SK-N-SH (cell line): ENCODE measurements at regions of chr13 and their contacts with region 1.

Region 1: DNA sequence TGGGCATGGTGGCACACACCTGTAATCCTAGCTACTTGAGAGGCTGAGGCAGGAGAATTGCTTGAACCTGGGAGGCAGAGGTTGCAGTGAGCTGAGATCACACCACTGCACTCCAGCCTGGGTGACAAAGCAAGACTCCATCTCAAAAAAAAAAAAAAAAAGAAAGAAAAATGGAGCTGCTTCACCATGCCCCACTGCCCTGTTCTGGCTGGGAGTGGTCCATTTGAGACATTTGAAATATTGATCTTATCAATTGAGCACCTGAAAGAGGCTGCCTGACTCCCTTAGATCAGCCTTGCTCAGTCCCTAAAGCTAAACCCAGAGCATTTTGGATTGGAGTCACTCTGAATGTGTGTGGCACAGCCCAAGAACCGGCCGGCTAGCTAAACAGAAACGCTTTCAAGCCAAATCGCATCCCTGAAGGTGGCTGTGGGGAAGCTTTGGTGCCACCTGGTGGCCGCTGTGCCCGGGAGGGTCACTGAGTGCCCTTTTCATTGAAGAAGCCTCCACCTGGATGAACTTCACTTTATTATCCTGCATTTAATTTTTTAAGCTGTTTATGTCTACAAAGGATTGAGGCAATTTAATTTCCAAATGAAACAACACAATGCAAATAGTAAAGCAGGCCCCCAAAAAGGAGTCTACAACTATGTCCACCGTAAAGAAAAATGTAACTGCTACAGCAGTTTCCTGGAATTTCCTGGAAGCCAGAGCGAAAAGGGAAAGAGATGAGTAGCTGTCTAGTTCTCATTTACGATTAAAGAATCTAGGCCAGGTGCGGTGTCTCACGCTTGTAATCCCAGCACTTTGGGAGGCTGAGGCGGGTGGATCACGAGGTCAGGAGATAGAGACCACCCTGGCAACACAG is 53.1 kb upstream of the SERPINE3 start:
- DNase-seq: peak; percentile 80
- H3K4me3 ChIP-seq: no peak overlapping the region; a peak in 1 of 4 replicates
- H3K27ac ChIP-seq: no peak overlapping the region
- H3K4me1 ChIP-seq: no peaks in the 10 kb centered on the region; a peak in 1 of 4 replicates
- H3K27me3 ChIP-seq: no peaks in the 10 kb centered on the region
- CTCF ChIP-seq: peak; percentile 98
- EP300 ChIP-seq: no peak
- RAD21 ChIP-seq: peak; percentile 95

Region 2: DNA sequence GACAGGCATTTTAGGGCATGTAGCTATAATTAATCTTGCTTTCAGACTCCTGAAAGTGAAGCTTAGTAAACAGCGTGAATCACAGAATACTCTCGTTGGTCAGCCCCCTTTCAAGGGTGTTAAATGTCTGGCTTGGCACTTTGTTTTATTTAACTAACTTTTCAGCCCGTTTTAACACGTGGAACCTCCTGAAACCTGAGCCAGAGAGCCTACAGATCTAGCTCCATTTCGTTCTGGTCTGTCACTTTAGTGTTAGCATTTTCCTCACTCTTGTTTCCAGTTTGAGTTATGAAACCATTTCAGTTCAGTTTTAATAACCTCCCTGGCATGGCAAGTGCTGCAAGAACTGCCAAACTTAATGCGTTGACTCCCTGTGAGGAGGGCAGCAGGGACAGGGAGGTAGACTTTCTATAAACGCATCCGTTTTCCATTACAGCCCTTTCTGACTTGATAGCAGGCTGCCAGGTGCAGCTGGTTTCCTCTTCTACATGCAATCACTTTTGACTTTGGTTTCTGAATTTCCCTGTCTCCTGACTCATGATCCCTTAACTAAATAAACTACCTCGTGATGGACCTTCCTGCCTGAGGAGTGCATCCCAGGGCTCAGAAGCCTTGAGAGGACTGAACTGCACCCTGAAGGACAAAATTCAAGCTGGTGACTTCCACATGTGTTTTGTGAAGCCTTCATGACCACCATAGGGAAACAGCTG is 635.6 kb before region 1 on chr13:
- CTCF ChIA-PET with region 1: no interaction called
- POLR2A ChIA-PET with region 1: no interaction called
- DNase-seq: no peak
- H3K4me3 ChIP-seq: no peak overlapping the region
- H3K27ac ChIP-seq: peak overlapping the region in 1 of 2 experiments; percentile 39; a peak in 2 of 4 replicates
- H3K4me1 ChIP-seq: peaks cover 5 to 10% of the 10 kb centered on the region in 2 experiments; a peak in 3 of 4 replicates
- H3K27me3 ChIP-seq: no peaks in the 10 kb centered on the region
- CTCF ChIP-seq: no peak
- EP300 ChIP-seq: 0 out of 4 replicates have a peak, but pooled peaks of 1 of the 2 experiments have one; percentile 24
- RAD21 ChIP-seq: no peak

Region 3: GRCh38 chr13:50745561-50746115 is 540.7 kb before region 1 on chr13:
- CTCF ChIA-PET with region 1: no interaction called
- POLR2A ChIA-PET with region 1: no interaction called
- DNase-seq: no peak
- H3K4me3 ChIP-seq: no peak overlapping the region
- H3K27ac ChIP-seq: no peak overlapping the region
- H3K4me1 ChIP-seq: no peaks in the 10 kb centered on the region
- H3K27me3 ChIP-seq: no peaks in the 10 kb centered on the region
- CTCF ChIP-seq: peak; percentile 31; the same call in 1 of the 2 replicates
- EP300 ChIP-seq: no peak
- RAD21 ChIP-seq: no peak

Region 4: GRCh38 chr13:51134763-51135365 is 151.5 kb before region 1 on chr13:
- CTCF ChIA-PET with region 1: interaction called, 105 read pairs
- POLR2A ChIA-PET with region 1: interaction called, 3 read pairs
- DNase-seq: no peak
- H3K4me3 ChIP-seq: no peak overlapping the region
- H3K27ac ChIP-seq: no peak overlapping the region
- H3K4me1 ChIP-seq: no peaks in the 10 kb centered on the region
- H3K27me3 ChIP-seq: no peaks in the 10 kb centered on the region
- CTCF ChIP-seq: no peak
- EP300 ChIP-seq: no peak
- RAD21 ChIP-seq: no peak

Region 5: GRCh38 chr13:51213173-51213728 is 73.1 kb before region 1 on chr13:
- CTCF ChIA-PET with region 1: interaction called, 25 read pairs
- POLR2A ChIA-PET with region 1: no interaction called
- DNase-seq: no peak
- H3K4me3 ChIP-seq: no peak overlapping the region
- H3K27ac ChIP-seq: no peak overlapping the region
- H3K4me1 ChIP-seq: peaks cover 0 to 2% of the 10 kb centered on the region in 2 experiments; a peak in 2 of 4 replicates
- H3K27me3 ChIP-seq: peaks cover 38% of the 10 kb centered on the region; the same call in 1 of the 2 replicates
- CTCF ChIP-seq: no peak
- EP300 ChIP-seq: no peak
- RAD21 ChIP-seq: no peak

Region 6: DNA sequence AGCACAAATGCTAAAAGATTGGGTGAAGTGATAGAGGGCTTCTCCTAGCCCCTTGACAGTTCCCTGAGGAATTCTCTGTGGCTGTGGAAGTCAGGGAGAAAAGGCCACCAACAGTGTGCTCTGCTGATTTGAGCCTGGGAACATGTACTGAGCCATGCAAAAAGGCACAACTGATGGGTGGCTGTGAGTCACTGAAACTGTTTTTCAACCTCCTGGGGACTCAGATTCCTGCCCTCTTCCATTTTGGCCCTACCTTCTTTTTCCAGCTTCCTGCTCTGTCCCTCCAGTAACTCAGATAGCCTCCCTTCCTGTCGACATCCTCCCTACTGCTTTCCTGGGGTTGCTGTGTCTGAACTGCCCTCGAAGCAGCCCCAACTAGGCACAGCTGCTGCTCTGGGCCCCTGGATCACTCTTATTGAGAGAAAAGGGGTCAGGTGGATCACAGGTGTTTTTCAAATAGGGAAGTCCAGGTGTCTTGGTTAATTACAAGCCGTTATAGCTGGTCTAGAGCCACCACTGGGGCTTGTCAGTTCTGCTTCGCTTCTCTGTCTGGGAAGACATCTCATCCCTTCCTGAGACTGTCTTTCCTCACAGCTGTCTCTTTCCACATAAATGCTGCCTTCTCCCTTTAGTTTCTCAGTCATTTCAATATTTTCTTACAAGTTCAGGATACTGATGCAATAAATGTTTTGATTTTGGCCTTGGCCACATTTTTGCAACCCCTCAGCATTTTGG is 50.4 kb before region 1 on chr13:
- CTCF ChIA-PET with region 1: interaction called, 31 read pairs
- POLR2A ChIA-PET with region 1: no interaction called
- DNase-seq: no peak
- H3K4me3 ChIP-seq: no peak overlapping the region
- H3K27ac ChIP-seq: no peak overlapping the region
- H3K4me1 ChIP-seq: peaks cover 2 to 9% of the 10 kb centered on the region in 2 experiments; a peak in 2 of 4 replicates
- H3K27me3 ChIP-seq: no peaks in the 10 kb centered on the region
- CTCF ChIP-seq: no peak
- EP300 ChIP-seq: no peak
- RAD21 ChIP-seq: no peak

Region 7: GRCh38 chr13:51262501-51263211 is 23.7 kb before region 1 on chr13:
- CTCF ChIA-PET with region 1: interaction called, 32 read pairs
- POLR2A ChIA-PET with region 1: no interaction called
- DNase-seq: no peak
- H3K4me3 ChIP-seq: no peak overlapping the region
- H3K27ac ChIP-seq: no peak overlapping the region
- H3K4me1 ChIP-seq: peaks cover 0 to 18% of the 10 kb centered on the region in 2 experiments; a peak in 1 of 4 replicates
- H3K27me3 ChIP-seq: no peaks in the 10 kb centered on the region
- CTCF ChIP-seq: no peak
- EP300 ChIP-seq: no peak
- RAD21 ChIP-seq: no peak

Region 8: GRCh38 chr13:51323824-51324511 is 37.6 kb after region 1 on chr13:
- CTCF ChIA-PET with region 1: interaction called, 11 read pairs
- POLR2A ChIA-PET with region 1: no interaction called
- DNase-seq: no peak
- H3K4me3 ChIP-seq: no peak overlapping the region
- H3K27ac ChIP-seq: no peak overlapping the region
- H3K4me1 ChIP-seq: no peaks in the 10 kb centered on the region; a peak in 1 of 4 replicates
- H3K27me3 ChIP-seq: no peaks in the 10 kb centered on the region
- CTCF ChIP-seq: no peak
- EP300 ChIP-seq: no peak
- RAD21 ChIP-seq: no peak

Region 9: DNA sequence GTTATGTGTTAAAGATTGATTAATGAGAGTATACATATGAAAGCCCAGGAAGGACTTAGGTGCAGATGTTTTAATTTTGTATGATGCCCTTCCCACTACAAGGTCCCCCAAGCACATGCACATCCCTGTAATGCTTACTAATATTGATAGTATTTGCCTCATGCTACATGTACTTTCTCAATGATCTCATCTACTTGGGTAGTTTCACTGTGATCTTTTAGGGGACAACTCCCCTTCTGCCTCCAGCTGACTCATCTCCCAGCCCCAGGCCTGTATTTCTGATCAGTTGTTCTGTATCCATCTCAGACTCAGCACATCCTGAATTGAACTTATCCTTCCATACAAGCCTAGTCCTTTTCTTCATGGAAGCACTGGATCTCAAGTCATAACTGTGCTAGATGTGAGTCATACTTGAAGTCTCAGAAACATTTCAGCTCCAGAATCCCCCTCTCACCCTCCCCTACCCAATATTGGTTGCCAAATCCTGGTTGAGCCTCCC is 215.8 kb after region 1 on chr13:
- CTCF ChIA-PET with region 1: no interaction called
- POLR2A ChIA-PET with region 1: no interaction called
- DNase-seq: no peak
- H3K4me3 ChIP-seq: no peak overlapping the region
- H3K27ac ChIP-seq: peak overlapping the region in 1 of 2 experiments; percentile 27; a peak in 2 of 4 replicates
- H3K4me1 ChIP-seq: peaks cover 0 to 11% of the 10 kb centered on the region in 2 experiments; a peak in 1 of 4 replicates
- H3K27me3 ChIP-seq: no peaks in the 10 kb centered on the region
- CTCF ChIP-seq: no peak
- EP300 ChIP-seq: no peak
- RAD21 ChIP-seq: no peak